Esophagus muscularis mucosa (tissue), 4 donors: ENCODE measurements at regions of chr19 and their contacts with region 1.

Region 1: GRCh38 chr19:35114353-35115176 is 1.1 kb upstream of the FXYD3 start:
- DNase-seq: no peak
- H3K4me3 ChIP-seq: peak overlapping the region; percentile 34 to 46 (median 37)
- H3K27ac ChIP-seq: peak overlapping the region; percentile 16 to 63 (median 59)
- H3K4me1 ChIP-seq: peaks cover 9 to 14% (median 12%) of the 10 kb centered on the region in 4 donors
- H3K27me3 ChIP-seq: peaks cover 0 to 16% (median 0%) of the 10 kb centered on the region in 4 donors
- CTCF ChIP-seq: peak; percentile 80 to 97 (median 83)
- EP300 ChIP-seq: no peak
- POLR2A ChIP-seq: no peak

Region 2: DNA sequence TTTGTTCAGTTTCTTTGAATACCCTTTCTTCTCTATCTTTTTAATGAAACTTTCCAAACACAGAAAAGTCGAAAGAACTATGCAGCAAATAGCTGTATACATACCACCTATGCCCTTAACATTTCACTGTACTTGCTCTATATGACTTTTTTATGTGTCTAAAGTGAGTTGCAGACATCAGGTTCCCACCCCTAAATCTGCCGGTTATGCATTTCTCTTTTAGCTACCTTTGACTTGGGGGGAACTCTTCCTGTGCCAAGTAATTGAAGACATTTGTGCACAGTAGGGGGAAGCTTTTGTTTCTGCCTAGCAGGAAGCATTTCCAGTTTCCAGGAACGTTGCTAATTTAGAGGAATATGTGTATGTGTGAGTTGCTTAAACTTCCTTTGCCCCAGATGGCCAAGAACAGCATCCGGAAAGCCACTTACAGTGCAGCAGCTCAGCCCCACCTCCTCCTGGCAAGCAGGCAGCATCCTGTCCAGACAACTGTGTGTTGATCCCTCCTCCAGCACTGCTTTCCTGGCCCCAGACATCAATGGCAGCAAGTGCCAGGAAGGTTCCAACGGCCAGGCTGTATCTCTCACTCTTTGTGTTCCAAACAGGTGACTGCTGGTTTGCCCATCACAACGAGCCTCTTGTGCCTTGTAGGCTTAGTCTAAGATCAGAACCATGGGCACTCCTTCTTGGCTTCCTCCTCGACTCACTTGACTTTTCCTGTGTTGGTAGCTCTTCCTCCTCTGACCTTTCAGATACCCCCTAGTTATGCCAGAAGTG is 129.1 kb before region 1 on chr19:
- intact Hi-C with region 1: no loop called
- DNase-seq: no peak
- H3K4me3 ChIP-seq: no peak overlapping the region
- H3K27ac ChIP-seq: peak overlapping the region in 2 of 4 donors; percentile 32 to 54
- H3K4me1 ChIP-seq: peaks cover 0 to 13% (median 7%) of the 10 kb centered on the region in 4 donors
- H3K27me3 ChIP-seq: no peaks in the 10 kb centered on the region
- CTCF ChIP-seq: no peak
- EP300 ChIP-seq: peak; percentile 71
- POLR2A ChIP-seq: no peak

Region 3: GRCh38 chr19:35135389-35135909 is 20.9 kb after region 1 on chr19:
- intact Hi-C with region 1: loop called (anchors 1 kb)
- DNase-seq: no peak
- H3K4me3 ChIP-seq: peak overlapping the region; percentile 34 to 50 (median 41)
- H3K27ac ChIP-seq: peak overlapping the region; percentile 66 to 87 (median 75)
- H3K4me1 ChIP-seq: peaks cover 24 to 55% (median 41%) of the 10 kb centered on the region in 4 donors
- H3K27me3 ChIP-seq: peaks cover 0 to 28% (median 2%) of the 10 kb centered on the region in 4 donors
- CTCF ChIP-seq: peak; percentile 82 to 87 (median 83)
- EP300 ChIP-seq: no peak
- POLR2A ChIP-seq: no peak